Transverse colon (tissue), 4 donors: ENCODE measurements at regions of chr7 and their contacts with region 1.

Region 1: GRCh38 chr7:92584996-92585395 is 5.2 kb downstream of the FAM133B start:
- DNase-seq: no peak
- H3K4me3 ChIP-seq: no peak overlapping the region
- H3K27ac ChIP-seq: no peak overlapping the region
- H3K4me1 ChIP-seq: peaks cover 11 to 42% (median 29%) of the 10 kb centered on the region in 4 donors
- H3K27me3 ChIP-seq: no peaks in the 10 kb centered on the region
- CTCF ChIP-seq: no peak
- EP300 ChIP-seq: no peak
- POLR2A ChIP-seq: no peak

Region 2: GRCh38 chr7:91299952-91300775 is 1284.8 kb before region 1 on chr7:
- in situ Hi-C with region 1: no loop called
- intact Hi-C with region 1: loop called (anchors 5 kb)
- DNase-seq: no peak
- H3K4me3 ChIP-seq: no peak overlapping the region
- H3K27ac ChIP-seq: no peak overlapping the region
- H3K4me1 ChIP-seq: no peaks in the 10 kb centered on the region
- H3K27me3 ChIP-seq: no peaks in the 10 kb centered on the region
- CTCF ChIP-seq: no peak
- EP300 ChIP-seq: no peak
- POLR2A ChIP-seq: no peak

Region 3: DNA sequence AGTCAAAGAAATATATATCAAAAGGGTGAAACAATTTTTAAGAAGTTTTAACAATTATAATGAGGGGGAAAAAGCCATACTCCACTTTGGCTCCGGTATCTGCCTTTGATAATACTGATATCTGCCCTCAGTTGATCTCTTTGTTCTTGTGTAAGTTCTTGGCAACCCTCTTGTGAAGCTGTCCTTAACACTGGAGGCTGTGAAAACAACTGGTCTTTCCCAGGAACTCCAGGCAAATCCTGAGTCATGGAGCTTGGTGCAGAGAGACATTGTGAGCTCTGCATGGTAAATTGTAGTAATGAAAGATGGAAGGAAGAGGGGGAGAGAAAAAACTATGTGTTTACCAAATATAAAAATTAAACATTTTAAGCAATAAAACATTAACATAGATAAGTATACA is 95.4 kb before region 1 on chr7:
- in situ Hi-C with region 1: no loop called
- intact Hi-C with region 1: no loop called
- DNase-seq: no peak
- H3K4me3 ChIP-seq: no peak overlapping the region
- H3K27ac ChIP-seq: no peak overlapping the region
- H3K4me1 ChIP-seq: peaks cover 0 to 14% (median 0%) of the 10 kb centered on the region in 4 donors
- H3K27me3 ChIP-seq: no peaks in the 10 kb centered on the region
- CTCF ChIP-seq: no peak
- EP300 ChIP-seq: no peak
- POLR2A ChIP-seq: no peak